ENCODE measurements at regions of chr1 and their contacts with region 1.

Region 1: GRCh38 chr1:199463521-199464128 is 563.9 kb upstream of the NR5A2 start:
- DNase-seq: peak; percentile 7
- CTCF ChIP-seq: peak; percentile 37

Region 2: GRCh38 chr1:199377211-199377610 is 86.4 kb before region 1 on chr1:
- CTCF ChIA-PET with region 1: no interaction called
- POLR2A ChIA-PET with region 1: no interaction called
- DNase-seq: no peak
- CTCF ChIP-seq: no peak

Region 3: GRCh38 chr1:199452627-199453026 is 11.0 kb before region 1 on chr1:
- CTCF ChIA-PET with region 1: interaction called, 10 read pairs
- POLR2A ChIA-PET with region 1: no interaction called
- DNase-seq: no peak
- CTCF ChIP-seq: no peak

Region 4: DNA sequence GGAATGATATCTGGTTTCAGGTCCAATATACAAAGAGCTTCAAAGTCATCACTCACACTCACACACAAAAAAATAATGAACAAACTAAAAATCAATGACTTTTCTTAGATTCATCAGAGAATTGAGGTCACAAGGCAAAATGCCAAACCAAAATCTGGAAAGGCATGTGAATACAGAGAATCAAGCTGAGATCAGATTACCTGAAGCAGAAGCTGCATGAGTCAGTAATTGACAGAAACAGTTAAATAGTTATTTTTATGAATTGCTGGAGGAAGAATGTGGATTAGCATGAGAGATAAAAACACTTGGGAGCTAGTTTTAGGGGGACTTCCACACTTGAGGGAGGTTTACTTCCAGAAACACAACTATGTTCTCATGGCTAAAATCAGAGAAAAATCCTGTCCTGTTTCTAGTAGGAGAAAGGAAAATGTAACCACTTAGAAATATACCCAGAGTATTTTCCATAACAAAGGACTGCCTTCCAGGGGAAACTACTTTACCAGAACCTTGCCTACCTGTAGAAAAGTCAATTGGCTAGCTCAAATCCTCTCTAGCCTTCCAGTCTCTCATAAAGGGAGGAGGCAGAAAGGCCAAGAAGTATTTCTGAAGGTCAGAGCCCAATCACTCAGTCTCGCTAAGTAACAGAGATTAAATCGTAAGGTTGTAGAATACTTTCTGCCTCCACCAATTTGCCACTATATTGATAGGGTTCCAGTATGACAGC is 27.3 kb after region 1 on chr1:
- CTCF ChIA-PET with region 1: no interaction called
- POLR2A ChIA-PET with region 1: no interaction called
- DNase-seq: no peak
- CTCF ChIP-seq: no peak

Region 5: GRCh38 chr1:199590708-199591107 is 127.1 kb after region 1 on chr1:
- CTCF ChIA-PET with region 1: no interaction called
- POLR2A ChIA-PET with region 1: no interaction called
- DNase-seq: peak; percentile 8
- CTCF ChIP-seq: no peak